CD14-positive monocyte (primary cell): ENCODE measurements at regions of chr15 and their contacts with region 1.

Region 1: GRCh38 chr15:64841258-64842095 is at the start of gene PLEKHO2:
- DNase-seq: peak; percentile 89 to 94 (median 89)
- H3K4me3 ChIP-seq: peak within 1 kb of the TSS; percentile 80 to 100 (median 96)
- H3K4me3 Mint-ChIP-seq: peak within 1 kb of the TSS; percentile 100
- H3K27ac ChIP-seq: peak within 1 kb of the TSS; percentile 86 to 87
- H3K27ac Mint-ChIP-seq: peak within 1 kb of the TSS; percentile 95 to 98 (median 96)
- H3K4me1 ChIP-seq: peaks cover 55 to 79% of the 10 kb centered on the region in 2 donors
- H3K4me1 Mint-ChIP-seq: peaks cover 68% of the 10 kb centered on the region
- H3K27me3 ChIP-seq: no peaks in the 10 kb centered on the region
- H3K27me3 Mint-ChIP-seq: peaks cover 0 to 3% (median 0%) of the 10 kb centered on the region in 3 donors
- CTCF ChIP-seq: no peak
- polyA plus RNA-seq, gene PLEKHO2: 54.1 to 93.5 (median 78.0) TPM

Region 2: DNA sequence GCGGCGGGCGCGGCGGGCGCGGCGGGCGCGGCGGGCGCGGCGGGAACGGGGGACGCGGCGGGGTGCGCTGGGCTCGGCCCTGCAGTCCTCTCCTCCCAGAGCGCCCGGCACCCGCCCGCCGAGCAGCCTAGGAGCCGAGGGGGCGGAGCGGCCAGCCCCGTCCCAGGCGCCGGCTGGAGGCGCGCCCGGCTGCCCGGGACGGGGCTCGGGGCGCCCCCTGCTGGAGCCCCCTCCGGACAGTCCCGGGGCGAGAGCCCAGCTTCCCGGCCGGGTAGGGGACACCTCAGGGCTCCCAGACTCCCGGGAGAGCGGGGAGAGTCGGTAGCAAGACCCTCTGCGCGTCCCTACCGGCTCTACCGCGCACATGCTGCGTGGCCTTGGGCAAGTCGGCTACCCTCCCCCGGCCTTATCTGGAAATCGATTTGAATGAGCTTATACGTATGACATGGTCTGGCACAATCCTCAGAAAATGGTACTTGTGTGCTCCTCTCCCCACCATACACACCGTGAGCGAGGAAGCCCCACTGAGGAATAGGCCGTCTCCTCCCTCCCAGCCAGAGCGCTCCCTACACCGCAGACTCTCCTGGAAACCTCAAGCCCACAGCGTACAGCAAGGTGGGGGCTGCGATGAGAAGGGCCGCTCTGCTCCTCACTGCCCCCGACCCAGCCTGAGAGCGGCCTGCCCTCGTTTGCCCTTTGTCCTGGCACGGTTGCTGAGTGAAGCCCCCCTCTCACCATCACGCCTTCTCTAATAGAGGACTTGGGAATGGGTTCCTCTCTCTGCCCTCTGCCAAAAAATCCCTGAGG is 794.9 kb before region 1 on chr15 and contains the start of gene DAPK2:
- intact Hi-C with region 1: no loop called
- DNase-seq: peak in 2 of 3 donors; percentile 49 to 56
- H3K4me3 ChIP-seq: peak within 1 kb of the TSS; percentile 12 to 62 (median 39)
- H3K4me3 Mint-ChIP-seq: peak within 1 kb of the TSS; percentile 65 to 84
- H3K27ac ChIP-seq: no peak within 1 kb of the TSS
- H3K27ac Mint-ChIP-seq: peak within 1 kb of the TSS in 3 of 7 donors; percentile 32 to 66 (median 53)
- H3K4me1 ChIP-seq: peaks cover 64 to 69% of the 10 kb centered on the region in 2 donors
- H3K4me1 Mint-ChIP-seq: peaks cover 69% of the 10 kb centered on the region
- H3K27me3 ChIP-seq: peaks cover 0 to 23% of the 10 kb centered on the region in 2 donors
- H3K27me3 Mint-ChIP-seq: peaks cover 28 to 47% (median 46%) of the 10 kb centered on the region in 3 donors
- CTCF ChIP-seq: peak; percentile 79
- polyA plus RNA-seq, gene DAPK2: 0.59 to 4.1 (median 2.1) TPM

Region 3: DNA sequence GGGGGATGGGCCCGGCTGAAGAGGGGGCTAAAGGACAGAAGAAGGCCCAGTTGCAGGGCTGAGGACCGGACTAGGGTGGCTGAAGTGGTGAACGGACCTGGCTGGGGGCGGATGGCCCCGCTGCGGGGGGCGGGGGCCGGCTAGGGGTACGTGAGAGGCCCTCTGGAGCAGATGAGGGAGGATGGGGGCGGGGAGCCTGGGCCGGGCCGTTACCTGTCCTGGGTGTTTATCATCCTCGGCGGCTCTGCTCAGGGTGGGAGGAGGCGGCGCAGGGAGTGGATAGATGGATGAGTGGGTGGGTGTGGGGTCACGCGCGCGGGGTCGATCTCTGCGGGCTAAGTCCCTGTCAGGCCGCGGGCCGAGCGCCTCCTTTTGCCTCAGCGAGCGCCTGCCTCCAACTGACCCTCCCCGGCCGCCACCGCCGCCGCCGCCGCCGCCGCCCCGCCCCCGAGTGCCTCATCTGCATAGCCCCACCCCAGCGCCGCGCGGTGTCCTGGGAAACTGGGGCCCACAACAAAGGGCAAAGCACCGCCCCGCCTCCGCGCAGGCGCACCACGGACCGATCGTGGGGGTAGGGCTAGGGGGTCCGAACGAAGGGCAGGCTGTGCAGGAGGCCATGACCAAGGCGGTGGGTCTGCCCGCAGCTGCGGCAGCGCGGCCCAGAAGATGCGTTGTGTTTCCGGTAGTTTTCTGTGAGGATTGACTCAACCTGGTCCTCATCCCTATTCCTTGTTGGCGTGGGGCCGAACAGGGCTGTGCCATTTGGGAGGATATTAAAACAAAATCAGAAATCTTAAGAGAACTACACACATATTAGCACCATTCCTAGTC is 138.4 kb before region 1 on chr15:
- intact Hi-C with region 1: loop called in 1 of 2 experiments (anchors 5 kb)
- DNase-seq: peak; percentile 83 to 89 (median 87)
- H3K4me3 ChIP-seq: peak overlapping the region; percentile 83 to 99 (median 95)
- H3K4me3 Mint-ChIP-seq: peak overlapping the region; percentile 89 to 95
- H3K27ac ChIP-seq: peak overlapping the region; percentile 75 to 91
- H3K27ac Mint-ChIP-seq: peak overlapping the region; percentile 80 to 96 (median 93)
- H3K4me1 ChIP-seq: peaks cover 40 to 51% of the 10 kb centered on the region in 2 donors
- H3K4me1 Mint-ChIP-seq: peaks cover 50% of the 10 kb centered on the region
- H3K27me3 ChIP-seq: no peaks in the 10 kb centered on the region
- H3K27me3 Mint-ChIP-seq: peaks cover 0 to 2% (median 0%) of the 10 kb centered on the region in 3 donors
- CTCF ChIP-seq: no peak

Region 4: DNA sequence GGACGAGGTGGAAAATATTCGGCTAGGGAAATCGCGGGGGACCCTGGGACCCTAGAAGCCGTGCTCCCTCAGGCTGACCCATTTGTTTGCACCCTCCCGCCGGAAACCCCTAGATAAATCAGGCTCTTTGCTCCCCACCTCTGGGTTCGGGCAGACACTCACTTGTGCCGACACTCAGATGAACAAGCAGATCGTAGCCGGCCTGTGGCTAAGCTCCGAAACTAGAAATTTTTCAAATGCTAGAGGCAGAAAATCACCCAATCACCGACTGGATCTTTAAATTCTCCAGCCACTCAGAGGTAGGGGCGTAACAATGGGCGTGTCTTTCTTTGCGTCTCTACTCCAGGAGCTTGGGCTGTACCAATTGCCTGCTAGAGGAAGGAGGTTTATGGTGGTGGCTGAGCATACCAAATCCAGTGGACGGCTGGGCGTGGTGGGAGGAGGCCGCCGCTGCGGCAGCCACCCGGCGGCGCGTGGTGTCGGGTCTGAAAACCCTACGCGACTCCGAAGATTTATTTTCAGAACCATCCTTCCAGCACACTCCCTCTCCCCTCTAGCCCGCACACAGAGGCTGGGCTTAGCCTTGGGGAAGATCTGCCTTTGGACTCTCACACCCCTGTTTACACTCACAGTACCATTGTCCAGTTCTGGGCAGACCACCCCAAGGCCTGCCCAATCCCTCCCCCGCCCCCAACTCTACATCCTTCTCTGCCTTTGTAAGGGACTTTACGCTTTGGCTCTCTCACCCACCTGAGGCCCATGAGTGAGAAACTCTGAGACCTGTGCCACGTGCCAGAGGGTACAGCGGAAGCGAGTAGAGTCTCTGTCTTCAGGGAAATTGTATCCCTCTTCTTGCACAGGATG is 15.8 kb before region 1 on chr15 and contains the start of gene PIF1:
- intact Hi-C with region 1: loop called (anchors 2 kb)
- DNase-seq: peak; percentile 95 to 98 (median 95)
- H3K4me3 ChIP-seq: peak within 1 kb of the TSS; percentile 32 to 77 (median 53)
- H3K4me3 Mint-ChIP-seq: peak within 1 kb of the TSS; percentile 80 to 94
- H3K27ac ChIP-seq: peak within 1 kb of the TSS in 1 of 2 donors; percentile 6
- H3K27ac Mint-ChIP-seq: peak within 1 kb of the TSS; percentile 41 to 92 (median 77)
- H3K4me1 ChIP-seq: peaks cover 24 to 29% of the 10 kb centered on the region in 2 donors
- H3K4me1 Mint-ChIP-seq: peaks cover 35% of the 10 kb centered on the region
- H3K27me3 ChIP-seq: peaks cover 4 to 16% of the 10 kb centered on the region in 2 donors
- H3K27me3 Mint-ChIP-seq: peaks cover 8 to 18% (median 17%) of the 10 kb centered on the region in 3 donors
- CTCF ChIP-seq: no peak
- polyA plus RNA-seq, gene PIF1: 0.13 to 0.43 TPM in 2 of 3 donors, not detected in the other

Region 5: DNA sequence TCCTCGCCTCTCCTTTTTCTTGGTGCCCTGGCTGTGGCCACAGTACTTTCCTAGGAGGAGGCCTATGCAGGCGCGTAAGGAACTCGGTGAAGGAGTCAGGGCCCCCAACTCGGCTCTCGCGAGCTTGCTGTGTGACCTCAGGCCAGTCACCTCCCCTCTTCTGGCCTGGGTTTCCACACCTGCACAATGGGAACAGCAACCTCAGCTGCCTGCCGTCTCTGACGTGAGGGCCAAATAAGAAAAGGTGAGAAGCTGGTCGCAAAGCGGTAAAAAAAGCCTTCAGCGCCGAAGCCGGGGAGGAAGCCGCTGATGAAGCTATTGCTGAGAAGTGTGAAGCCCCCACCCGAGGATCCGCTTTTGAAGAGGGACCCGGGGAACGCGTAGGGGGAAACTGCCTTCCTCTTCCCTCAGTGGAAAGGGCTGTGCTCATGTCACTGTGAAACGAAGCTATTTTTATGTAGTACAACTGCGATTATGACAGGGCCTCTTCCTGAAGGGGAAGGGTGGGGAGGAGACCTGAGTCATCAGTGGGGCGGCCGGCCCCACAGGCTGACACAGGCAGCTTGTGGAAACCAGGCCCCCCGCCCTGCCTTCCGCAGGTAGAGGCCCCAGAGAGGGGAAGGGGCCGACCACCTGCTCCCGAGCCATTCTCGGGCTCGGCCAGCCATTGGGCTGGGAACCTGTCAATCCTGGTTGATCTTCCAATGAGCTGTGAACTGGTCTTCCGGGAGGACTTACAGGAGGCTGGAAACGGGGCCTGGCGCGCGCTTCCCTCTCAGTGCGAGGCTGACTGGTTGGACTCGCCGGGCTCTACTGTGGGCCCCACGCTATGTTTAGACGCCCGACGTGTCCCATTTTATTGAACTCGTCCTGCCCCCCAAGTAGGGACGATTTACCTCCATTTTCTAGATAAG is 52.3 kb after region 1 on chr15:
- intact Hi-C with region 1: loop called (anchors 2 kb)
- DNase-seq: peak; percentile 97 to 98 (median 97)
- H3K4me3 ChIP-seq: peak overlapping the region in 2 of 3 experiments; percentile 15 to 66
- H3K4me3 Mint-ChIP-seq: peak overlapping the region; percentile 77 to 86
- H3K27ac ChIP-seq: peak overlapping the region; percentile 99
- H3K27ac Mint-ChIP-seq: peak overlapping the region; percentile 99 to 100 (median 100)
- H3K4me1 ChIP-seq: peaks cover 78 to 80% of the 10 kb centered on the region in 2 donors
- H3K4me1 Mint-ChIP-seq: peaks cover 76% of the 10 kb centered on the region
- H3K27me3 ChIP-seq: no peaks in the 10 kb centered on the region
- H3K27me3 Mint-ChIP-seq: no peaks in the 10 kb centered on the region
- CTCF ChIP-seq: no peak

Region 6: GRCh38 chr15:64905119-64905831 is 63.8 kb after region 1 on chr15:
- intact Hi-C with region 1: loop called in 1 of 2 experiments (anchors 5 kb)
- DNase-seq: peak; percentile 76 to 77 (median 77)
- H3K4me3 ChIP-seq: peak overlapping the region; percentile 5 to 65 (median 20)
- H3K4me3 Mint-ChIP-seq: peak overlapping the region; percentile 75 to 84
- H3K27ac ChIP-seq: peak overlapping the region in 1 of 2 donors; percentile 13
- H3K27ac Mint-ChIP-seq: peak overlapping the region; percentile 17 to 91 (median 73)
- H3K4me1 ChIP-seq: peaks cover 17 to 26% of the 10 kb centered on the region in 2 donors
- H3K4me1 Mint-ChIP-seq: peaks cover 31% of the 10 kb centered on the region
- H3K27me3 ChIP-seq: peaks cover 0 to 8% of the 10 kb centered on the region in 2 donors
- H3K27me3 Mint-ChIP-seq: peaks cover 7 to 16% (median 15%) of the 10 kb centered on the region in 3 donors
- CTCF ChIP-seq: peak; percentile 90

Region 7: DNA sequence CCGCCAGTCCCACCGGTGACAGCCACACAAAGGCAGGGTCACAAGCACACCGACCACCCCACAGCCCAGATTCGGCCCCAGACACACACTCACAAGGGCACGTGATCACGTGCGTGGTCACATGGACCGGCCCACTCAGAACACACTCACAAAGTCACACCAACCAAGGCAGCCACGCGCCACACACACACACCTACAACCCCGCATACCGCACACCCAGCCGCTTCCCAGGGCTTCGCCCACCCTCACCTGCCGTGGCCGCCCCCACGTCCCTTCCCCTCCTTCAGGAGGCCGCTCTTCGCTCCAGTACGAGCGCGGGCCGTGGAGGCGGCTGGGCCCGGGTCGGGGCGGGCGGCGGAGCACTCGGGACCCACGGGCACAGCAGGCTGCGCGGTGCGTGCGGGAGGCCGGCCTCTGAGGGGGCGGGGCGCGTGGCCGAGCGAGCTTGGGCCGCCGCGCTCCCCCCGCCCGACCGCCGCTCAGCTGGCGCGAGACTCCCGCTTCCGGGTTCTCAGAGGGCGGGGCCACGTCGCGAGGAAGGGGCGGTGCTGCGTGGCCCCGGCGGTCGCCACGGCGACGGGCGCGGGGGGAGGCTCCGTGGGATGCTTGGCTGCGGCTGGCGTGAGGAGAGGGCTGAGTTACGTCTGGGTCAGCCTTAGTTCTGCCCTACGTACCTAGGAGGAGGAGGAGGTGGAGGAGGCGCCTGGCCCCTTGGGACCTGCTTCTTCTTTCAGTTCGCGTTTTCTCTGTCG is 148.1 kb after region 1 on chr15 and contains the start of gene SPG21:
- intact Hi-C with region 1: loop called in 1 of 2 experiments (anchors 10 kb)
- DNase-seq: peak; percentile 92 to 96 (median 93)
- H3K4me3 ChIP-seq: peak within 1 kb of the TSS; percentile 92 to 98 (median 95)
- H3K4me3 Mint-ChIP-seq: peak within 1 kb of the TSS; percentile 99
- H3K27ac ChIP-seq: peak within 1 kb of the TSS; percentile 91 to 96
- H3K27ac Mint-ChIP-seq: peak within 1 kb of the TSS; percentile 94 to 98 (median 97)
- H3K4me1 ChIP-seq: peaks cover 48 to 53% of the 10 kb centered on the region in 2 donors
- H3K4me1 Mint-ChIP-seq: peaks cover 50% of the 10 kb centered on the region
- H3K27me3 ChIP-seq: no peaks in the 10 kb centered on the region
- H3K27me3 Mint-ChIP-seq: peaks cover 0 to 4% (median 0%) of the 10 kb centered on the region in 3 donors
- CTCF ChIP-seq: no peak
- polyA plus RNA-seq, gene SPG21: 102 to 375 (median 358) TPM